GM12878 (cell line): ENCODE measurements at regions of chr3 and their contacts with region 1.

Region 1: DNA sequence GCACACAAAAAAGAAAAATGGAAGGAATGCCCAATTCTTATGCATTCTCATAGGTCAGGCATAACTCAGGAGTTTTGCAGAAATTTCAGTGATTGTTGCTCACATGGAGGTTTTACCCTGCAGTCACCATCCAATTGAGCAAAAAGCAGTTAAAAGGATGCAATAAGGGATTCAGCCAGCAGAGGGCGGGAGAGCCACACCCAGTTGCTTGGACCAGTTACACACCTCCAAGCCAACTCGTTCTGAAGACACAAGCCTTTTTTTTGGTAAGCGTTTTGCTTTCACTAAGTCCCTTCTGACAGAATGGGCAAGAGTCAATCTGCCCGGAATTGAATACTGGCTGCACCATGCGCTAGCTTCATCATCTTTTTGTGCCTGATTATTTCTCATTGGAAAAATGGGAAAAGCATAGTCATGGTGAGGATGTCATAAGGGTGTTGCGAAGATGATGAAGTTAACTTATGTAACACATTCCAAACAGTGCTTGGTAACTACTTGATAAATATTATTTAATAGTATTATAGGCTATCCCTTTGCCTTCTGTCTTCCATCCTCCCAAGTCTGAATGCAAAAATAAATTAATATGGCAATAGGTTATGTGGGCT is 154.4 kb upstream of the SGO1 start:
- DNase-seq: peak; percentile 25
- ATAC-seq: peak; percentile 91
- H3K4me3 ChIP-seq: no peak overlapping the region
- H3K27ac ChIP-seq: no peak overlapping the region
- H3K4me1 ChIP-seq: no peaks in the 10 kb centered on the region
- H3K27me3 ChIP-seq: no peaks in the 10 kb centered on the region
- CTCF ChIP-seq: peak; percentile 85 to 92 (median 86)
- EP300 ChIP-seq: no peak
- POLR2A ChIP-seq: no peak
- RAD21 ChIP-seq: peak; percentile 83

Region 2: DNA sequence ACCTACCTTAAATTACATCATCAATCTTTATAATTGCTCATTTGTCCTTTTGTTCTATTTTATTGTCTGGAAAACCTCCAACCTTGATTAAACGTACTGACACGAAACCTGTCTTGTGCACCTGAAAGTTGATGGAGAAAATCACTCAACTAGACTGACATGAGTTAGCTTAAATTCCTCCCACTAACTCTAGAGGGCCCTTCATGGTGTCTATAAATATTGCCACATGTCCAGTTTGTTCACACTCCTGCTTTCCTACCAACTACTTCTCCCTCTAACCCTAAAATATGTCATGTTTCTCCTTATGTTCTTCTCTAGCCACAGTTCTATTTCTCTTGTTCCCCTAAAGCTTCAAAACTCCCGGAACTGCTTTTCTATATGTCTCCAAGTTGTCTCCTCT is 94.6 kb before region 1 on chr3:
- CTCF ChIA-PET with region 1: no interaction called
- POLR2A ChIA-PET with region 1: no interaction called
- RAD21 ChIA-PET with region 1: no interaction called
- SMC1A ChIA-PET with region 1: no interaction called
- in situ Hi-C with region 1: no loop called
- intact Hi-C with region 1: no loop called
- DNase-seq: no peak
- ATAC-seq: peak; percentile 51
- H3K4me3 ChIP-seq: no peak overlapping the region
- H3K27ac ChIP-seq: no peak overlapping the region
- H3K4me1 ChIP-seq: peaks cover 8% of the 10 kb centered on the region; the same call in 1 of the 2 replicates
- H3K27me3 ChIP-seq: no peaks in the 10 kb centered on the region
- CTCF ChIP-seq: no peak
- EP300 ChIP-seq: no peak
- POLR2A ChIP-seq: no peak
- RAD21 ChIP-seq: no peak

Region 3: DNA sequence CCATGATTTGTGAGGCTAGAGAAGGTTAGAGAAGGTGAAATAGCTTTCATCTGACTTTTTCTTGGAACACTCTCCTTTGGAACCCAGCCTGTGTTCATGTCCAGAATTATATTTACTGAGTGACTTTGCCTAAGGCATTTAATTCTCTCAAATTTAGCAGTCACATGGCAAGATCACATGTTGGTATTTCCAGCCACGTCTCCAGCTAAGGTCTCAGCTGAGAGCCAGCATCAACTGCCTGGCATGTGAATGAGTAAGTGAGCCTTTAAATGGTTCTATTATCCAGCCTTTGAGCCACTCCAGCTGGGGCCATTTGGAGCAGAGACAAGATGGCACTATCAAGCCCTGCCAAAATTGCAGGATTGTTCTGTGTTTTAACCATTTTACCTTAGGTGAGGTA is 24.2 kb before region 1 on chr3:
- CTCF ChIA-PET with region 1: no interaction called
- POLR2A ChIA-PET with region 1: no interaction called
- RAD21 ChIA-PET with region 1: no interaction called
- SMC1A ChIA-PET with region 1: no interaction called
- in situ Hi-C with region 1: no loop called
- intact Hi-C with region 1: no loop called
- DNase-seq: no peak
- ATAC-seq: no peak
- H3K4me3 ChIP-seq: no peak overlapping the region
- H3K27ac ChIP-seq: no peak overlapping the region
- H3K4me1 ChIP-seq: no peaks in the 10 kb centered on the region
- H3K27me3 ChIP-seq: no peaks in the 10 kb centered on the region
- CTCF ChIP-seq: no peak
- EP300 ChIP-seq: no peak
- POLR2A ChIP-seq: no peak
- RAD21 ChIP-seq: no peak

Region 4: DNA sequence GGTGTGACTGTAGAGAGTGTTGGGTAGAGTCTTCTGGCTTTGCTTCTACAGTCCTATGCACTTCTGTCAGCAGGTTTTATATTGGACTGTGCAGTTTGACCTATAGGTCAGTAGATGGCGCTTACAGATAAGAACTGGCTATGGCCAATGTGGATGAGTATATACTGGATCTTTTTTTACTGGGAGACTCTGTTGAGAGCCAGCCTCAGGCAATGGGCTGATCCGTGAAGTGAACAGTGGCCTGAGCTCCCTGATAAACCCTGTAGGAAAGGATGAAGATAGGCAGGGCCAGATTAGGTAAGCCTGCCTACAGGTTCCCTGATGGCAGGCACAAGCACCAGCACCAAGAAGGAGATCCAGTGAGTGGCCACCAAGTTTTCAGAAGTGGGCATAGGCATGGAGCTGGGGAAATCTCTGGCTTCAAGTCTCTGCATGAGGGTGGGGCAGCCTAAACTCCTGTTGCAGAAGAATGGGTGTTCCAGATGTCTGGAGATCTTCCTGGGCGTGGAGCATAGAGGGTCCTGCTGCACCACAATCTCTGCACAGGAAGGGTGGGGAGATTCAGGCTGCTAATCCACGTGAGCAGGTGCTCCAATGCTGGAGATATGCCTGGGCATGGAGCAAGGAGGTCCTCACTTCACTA is 171.6 kb after region 1 on chr3:
- CTCF ChIA-PET with region 1: no interaction called
- POLR2A ChIA-PET with region 1: no interaction called
- RAD21 ChIA-PET with region 1: no interaction called
- SMC1A ChIA-PET with region 1: no interaction called
- in situ Hi-C with region 1: no loop called
- intact Hi-C with region 1: loop called (anchors 2 kb)
- DNase-seq: no peak
- ATAC-seq: peak; percentile 98
- H3K4me3 ChIP-seq: no peak overlapping the region
- H3K27ac ChIP-seq: no peak overlapping the region
- H3K4me1 ChIP-seq: no peaks in the 10 kb centered on the region
- H3K27me3 ChIP-seq: no peaks in the 10 kb centered on the region
- CTCF ChIP-seq: peak; percentile 64 to 67 (median 67); a peak in 5 of 6 replicates
- EP300 ChIP-seq: no peak
- POLR2A ChIP-seq: no peak
- RAD21 ChIP-seq: peak; percentile 86

Region 5: DNA sequence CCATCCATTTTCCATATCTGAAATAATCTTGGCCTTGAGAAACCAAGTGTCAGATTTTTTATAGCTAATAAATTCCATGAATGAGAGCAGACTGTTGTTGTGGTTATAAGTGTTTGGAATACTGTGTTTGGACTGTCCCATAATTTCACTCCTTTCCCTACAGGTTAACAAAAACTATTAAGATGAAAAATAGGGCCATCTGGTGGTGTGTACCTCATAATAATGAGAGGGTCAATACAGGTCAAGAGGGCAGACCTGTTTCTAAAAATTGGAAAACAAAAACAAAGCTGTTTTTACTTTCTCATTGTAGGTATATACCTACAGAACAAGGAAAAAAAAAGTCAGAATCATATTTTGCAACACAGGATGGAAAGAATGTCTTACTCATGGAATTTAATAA is 399.4 kb after region 1 on chr3:
- CTCF ChIA-PET with region 1: no interaction called
- POLR2A ChIA-PET with region 1: no interaction called
- RAD21 ChIA-PET with region 1: no interaction called
- SMC1A ChIA-PET with region 1: no interaction called
- in situ Hi-C with region 1: no loop called
- intact Hi-C with region 1: loop called (anchors 10 kb)
- DNase-seq: no peak
- ATAC-seq: no peak
- H3K4me3 ChIP-seq: no peak overlapping the region
- H3K27ac ChIP-seq: no peak overlapping the region
- H3K4me1 ChIP-seq: no peaks in the 10 kb centered on the region
- H3K27me3 ChIP-seq: no peaks in the 10 kb centered on the region
- CTCF ChIP-seq: no peak
- EP300 ChIP-seq: no peak
- POLR2A ChIP-seq: no peak
- RAD21 ChIP-seq: no peak

Region 6: DNA sequence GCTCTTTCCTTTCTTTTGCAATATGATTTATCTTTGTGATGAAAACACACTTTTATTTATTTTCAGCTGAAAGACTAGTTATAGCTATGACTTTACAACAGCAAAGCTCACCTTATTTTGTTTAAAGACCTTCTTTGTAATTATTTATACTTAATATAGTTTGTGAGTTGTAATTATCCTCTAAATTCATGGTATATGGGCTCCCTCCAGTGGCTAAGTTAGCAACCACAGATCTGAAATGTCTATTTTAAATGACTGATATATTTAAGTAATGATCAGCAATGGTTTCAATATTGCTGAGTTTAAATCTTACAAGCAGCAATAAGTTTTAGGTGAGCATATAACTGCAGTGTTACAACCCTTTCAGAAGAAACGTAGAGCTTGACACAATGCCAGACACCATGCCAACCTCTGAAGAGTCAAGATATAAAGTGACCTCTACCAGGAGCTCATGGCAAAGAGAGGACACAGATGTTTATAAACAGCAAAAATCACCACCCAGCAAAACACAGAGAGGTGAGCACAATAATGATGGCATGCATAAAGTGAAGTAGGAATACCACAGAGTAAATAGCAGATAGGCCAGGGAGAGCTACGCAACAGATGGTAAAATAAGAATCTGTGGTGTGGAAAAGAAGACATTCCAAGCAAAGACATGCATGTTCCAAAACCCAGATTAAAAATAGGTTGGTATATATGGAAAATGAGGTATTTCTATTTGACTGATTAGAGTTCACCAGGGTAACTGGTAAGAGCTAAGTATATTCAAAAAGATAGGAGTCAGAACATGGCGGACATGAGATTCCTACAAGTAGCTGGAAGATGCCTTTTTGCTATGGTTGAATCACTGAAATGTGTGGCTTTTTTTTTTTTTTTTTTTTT is 1554.3 kb after region 1 on chr3:
- CTCF ChIA-PET with region 1: no interaction called
- POLR2A ChIA-PET with region 1: no interaction called
- RAD21 ChIA-PET with region 1: no interaction called
- SMC1A ChIA-PET with region 1: no interaction called
- in situ Hi-C with region 1: no loop called
- intact Hi-C with region 1: loop called (anchors 5 kb)
- DNase-seq: no peak
- ATAC-seq: peak; percentile 36; the same call in 1 of the 3 replicates
- H3K4me3 ChIP-seq: no peak overlapping the region
- H3K27ac ChIP-seq: no peak overlapping the region
- H3K4me1 ChIP-seq: no peaks in the 10 kb centered on the region
- H3K27me3 ChIP-seq: no peaks in the 10 kb centered on the region
- CTCF ChIP-seq: no peak; a peak in 1 of 6 replicates
- EP300 ChIP-seq: no peak
- POLR2A ChIP-seq: no peak
- RAD21 ChIP-seq: peak; percentile 52